ENCODE measurements at regions of chr19 and their contacts with region 1.

Region 1: DNA sequence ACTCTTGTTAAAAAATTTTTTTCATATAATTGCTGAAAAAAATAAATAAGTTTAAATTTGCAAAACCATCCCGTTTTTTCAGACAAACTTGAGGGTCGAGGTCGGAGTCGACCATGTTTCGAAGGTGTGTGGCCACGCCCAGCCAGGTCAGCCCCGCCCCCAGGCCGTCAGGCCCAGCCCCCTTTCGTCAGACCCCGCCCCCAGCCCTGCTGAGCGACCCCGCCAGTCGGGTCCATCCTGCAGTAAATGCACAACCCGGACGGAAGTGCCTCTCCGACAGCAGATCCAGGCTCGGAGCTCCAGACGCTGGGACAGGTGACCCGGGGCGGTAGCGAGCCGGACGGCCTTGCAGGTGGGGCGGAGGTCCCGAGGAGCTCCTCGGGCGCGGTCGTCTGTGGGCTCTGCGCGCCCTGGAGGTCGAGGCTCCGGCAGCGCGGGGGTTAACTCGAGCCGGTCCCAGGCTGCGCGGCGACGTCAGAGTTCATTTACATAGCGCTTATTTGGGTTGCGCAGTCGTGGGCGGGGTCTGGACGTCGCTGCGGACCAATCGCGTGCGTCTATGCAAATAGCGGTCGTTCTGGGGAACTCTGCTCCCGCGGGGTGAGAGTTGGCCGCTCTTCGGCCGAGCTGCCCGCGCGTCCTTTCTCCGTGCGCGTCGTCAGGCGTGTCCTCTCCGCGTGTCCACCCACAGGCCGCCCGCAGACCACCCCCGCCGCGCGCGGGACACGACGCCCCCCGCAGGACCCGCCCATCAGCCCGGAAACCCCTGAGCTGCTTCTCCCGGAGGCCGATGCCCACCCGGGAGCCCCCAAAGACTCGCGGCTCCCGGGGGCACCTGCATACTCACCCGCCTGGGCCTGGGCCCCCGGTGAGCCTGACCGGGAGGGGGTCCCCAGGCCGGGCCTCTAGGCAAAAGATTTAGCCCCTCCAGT is at the start of gene OCEL1:
- DNase-seq: peak; percentile 96
- H3K4me3 Mint-ChIP-seq: peak within 1 kb of the TSS; percentile 90
- H3K27ac Mint-ChIP-seq: peak within 1 kb of the TSS; percentile 98
- H3K4me1 Mint-ChIP-seq: peaks cover 5% of the 10 kb centered on the region
- H3K27me3 Mint-ChIP-seq: no peaks in the 10 kb centered on the region
- total RNA-seq, gene OCEL1: 20.7 and 22.0 TPM in 2 replicates

Region 2: DNA sequence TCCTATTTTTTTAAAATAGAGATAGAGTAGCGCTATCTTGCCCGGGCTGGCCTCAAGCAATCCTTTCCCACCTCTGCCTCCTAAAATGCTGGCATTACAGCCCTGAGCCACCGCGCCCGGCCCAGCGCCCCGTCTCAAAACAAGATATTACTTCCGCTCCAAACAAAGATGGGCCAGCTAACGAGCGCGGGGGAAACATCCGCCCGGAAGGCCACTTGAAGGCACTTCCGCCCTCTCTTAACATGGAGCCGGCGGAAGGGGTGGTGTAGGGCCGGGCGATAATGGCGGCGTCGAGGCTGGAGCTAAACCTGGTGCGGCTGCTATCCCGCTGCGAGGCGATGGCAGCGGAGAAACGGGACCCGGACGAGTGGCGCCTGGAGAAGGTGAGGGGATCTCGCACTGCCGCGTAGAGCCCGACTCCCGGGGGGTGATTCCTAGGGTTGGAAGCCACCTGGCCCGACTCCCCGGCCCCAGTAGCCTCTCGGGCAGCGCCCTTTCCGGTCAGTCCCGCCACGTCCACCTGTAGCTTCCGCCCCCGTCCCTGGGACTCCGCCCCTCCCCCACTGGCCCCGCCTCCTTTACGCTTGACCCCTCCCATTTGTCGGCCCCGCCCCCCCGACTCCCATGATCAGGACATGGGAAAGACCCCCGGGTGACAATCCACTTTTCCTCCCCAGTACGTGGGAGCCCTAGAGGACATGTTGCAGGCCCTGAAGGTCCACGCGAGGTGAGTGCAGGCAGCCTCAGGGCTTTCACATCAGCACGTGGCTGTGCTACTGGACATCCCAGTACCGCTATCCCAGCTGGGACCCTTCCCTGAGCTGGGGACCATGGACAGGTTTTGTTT is 10.9 kb before region 1 on chr19 and contains the start of gene USE1:
- intact Hi-C with region 1: loop called (anchors 1 kb)
- DNase-seq: peak; percentile 84
- H3K4me3 Mint-ChIP-seq: peak within 1 kb of the TSS; percentile 84
- H3K27ac Mint-ChIP-seq: peak within 1 kb of the TSS; percentile 96
- H3K4me1 Mint-ChIP-seq: peaks cover 5% of the 10 kb centered on the region
- H3K27me3 Mint-ChIP-seq: no peaks in the 10 kb centered on the region
- total RNA-seq, gene USE1: 26.4 and 27.2 TPM in 2 replicates

Measured in activated T-helper 2 cell treated with anti-CD3 and anti-CD28 coated beads, Interferon-gamma antibody, Interleukin-2, Interleukin-4, amounts not matched to agents 10 μg/mL and 5 μg/mL and 100 μg/mL, durations not matched to agents 14 hours and 24 hours and 36 hours (primary cell).